ENCODE measurements at regions of chr17 and their contacts with region 1.

Region 1: DNA sequence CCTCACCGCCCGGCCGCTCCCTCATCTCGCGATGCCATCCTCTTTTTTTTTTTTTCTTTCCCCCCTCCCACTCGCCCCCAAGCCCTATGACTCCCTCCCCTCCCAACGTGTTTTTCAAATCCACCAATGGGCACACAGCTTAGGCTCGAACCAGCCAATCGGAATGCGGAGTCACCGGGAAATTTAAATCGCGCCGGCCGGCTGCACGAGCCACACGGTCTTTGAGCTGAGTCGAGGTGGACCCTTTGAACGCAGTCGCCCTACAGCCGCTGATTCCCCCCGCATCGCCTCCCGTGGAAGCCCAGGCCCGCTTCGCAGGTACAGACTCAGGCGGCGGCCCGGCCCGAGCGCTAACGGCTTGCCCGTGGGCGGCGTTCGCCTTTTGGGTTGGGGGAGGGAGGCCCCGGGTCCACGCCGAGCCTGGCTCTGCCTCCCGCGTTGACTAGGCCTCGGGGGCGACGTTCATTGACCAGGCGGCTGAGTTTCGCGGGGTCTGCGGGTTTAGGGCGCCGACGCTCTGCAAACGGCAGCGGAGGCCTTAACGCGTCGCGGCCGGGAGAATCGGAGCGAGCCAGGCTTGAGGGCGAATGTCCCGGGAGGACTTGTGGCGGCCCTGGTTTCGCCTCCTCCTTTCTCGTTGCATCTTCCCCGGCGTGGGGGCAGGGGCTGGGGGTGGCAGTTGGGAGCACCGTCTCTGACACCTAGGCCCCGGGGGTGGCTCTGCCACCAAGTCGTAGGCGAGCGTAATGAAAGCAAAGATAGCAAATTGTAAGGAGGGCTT is at the start of gene KPNA2:
- DNase-seq: peak; percentile 98
- H3K4me3 Mint-ChIP-seq: peak within 1 kb of the TSS; percentile 95
- H3K27ac Mint-ChIP-seq: peak within 1 kb of the TSS; percentile 92
- H3K4me1 Mint-ChIP-seq: peaks cover 16% of the 10 kb centered on the region
- H3K27me3 Mint-ChIP-seq: no peaks in the 10 kb centered on the region
- total RNA-seq, gene KPNA2: 210 and 240 TPM in 2 replicates

Region 2: GRCh38 chr17:67717624-67718329 is 317.9 kb before region 1 on chr17 and contains the start of gene NOL11:
- intact Hi-C with region 1: loop called (anchors 5 kb)
- DNase-seq: peak; percentile 100
- H3K4me3 Mint-ChIP-seq: peak within 1 kb of the TSS; percentile 90
- H3K27ac Mint-ChIP-seq: peak within 1 kb of the TSS; percentile 96
- H3K4me1 Mint-ChIP-seq: peaks cover 16% of the 10 kb centered on the region
- H3K27me3 Mint-ChIP-seq: peaks cover 4% of the 10 kb centered on the region
- total RNA-seq, gene NOL11: 110 and 118 TPM in 2 replicates

Region 3: GRCh38 chr17:67993596-67994361 is 41.9 kb before region 1 on chr17:
- intact Hi-C with region 1: loop called (anchors 5 kb)
- DNase-seq: peak; percentile 92
- H3K4me3 Mint-ChIP-seq: peak overlapping the region; percentile 82
- H3K27ac Mint-ChIP-seq: peak overlapping the region; percentile 89
- H3K4me1 Mint-ChIP-seq: peaks cover 35% of the 10 kb centered on the region
- H3K27me3 Mint-ChIP-seq: peaks cover 28% of the 10 kb centered on the region

Region 4: DNA sequence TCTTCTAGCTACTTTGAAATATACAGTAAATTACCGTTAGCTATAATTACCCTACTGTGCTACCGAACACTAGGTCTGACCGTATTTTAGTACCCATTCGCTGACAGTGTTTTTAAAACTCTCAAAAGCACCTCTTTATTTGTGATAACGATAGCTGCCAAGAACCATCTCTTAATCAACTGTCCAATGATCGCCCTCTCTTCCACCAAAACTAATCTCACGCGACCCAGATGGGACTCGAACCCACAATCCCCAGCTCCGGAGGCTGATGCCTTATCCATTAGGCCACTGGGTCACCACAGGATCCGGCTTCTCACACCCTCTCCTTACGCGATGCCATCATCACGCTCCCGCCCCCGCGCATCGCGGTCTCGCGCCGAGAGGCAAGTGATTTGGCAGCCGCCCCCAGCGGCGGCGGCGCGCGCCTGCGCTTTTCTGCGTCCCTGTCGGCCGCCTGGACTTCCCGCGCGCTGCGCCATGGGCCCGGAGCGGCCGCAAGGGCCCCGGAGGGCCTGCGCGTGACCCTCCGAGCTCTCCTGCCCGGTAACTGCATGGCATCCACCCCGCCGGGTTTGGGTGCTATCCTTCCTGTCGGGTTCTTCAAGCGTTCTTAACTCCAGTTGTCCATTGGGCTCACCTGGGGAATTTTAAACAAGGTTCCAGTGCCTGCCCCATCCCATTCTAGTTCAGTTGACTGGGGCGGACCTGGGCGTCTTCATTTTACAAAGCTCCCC is 15.9 kb before region 1 on chr17:
- intact Hi-C with region 1: loop called (anchors 1 kb)
- DNase-seq: peak; percentile 99
- H3K4me3 Mint-ChIP-seq: peak overlapping the region; percentile 82
- H3K27ac Mint-ChIP-seq: peak overlapping the region; percentile 90
- H3K4me1 Mint-ChIP-seq: peaks cover 14% of the 10 kb centered on the region
- H3K27me3 Mint-ChIP-seq: peaks cover 9% of the 10 kb centered on the region

Region 5: DNA sequence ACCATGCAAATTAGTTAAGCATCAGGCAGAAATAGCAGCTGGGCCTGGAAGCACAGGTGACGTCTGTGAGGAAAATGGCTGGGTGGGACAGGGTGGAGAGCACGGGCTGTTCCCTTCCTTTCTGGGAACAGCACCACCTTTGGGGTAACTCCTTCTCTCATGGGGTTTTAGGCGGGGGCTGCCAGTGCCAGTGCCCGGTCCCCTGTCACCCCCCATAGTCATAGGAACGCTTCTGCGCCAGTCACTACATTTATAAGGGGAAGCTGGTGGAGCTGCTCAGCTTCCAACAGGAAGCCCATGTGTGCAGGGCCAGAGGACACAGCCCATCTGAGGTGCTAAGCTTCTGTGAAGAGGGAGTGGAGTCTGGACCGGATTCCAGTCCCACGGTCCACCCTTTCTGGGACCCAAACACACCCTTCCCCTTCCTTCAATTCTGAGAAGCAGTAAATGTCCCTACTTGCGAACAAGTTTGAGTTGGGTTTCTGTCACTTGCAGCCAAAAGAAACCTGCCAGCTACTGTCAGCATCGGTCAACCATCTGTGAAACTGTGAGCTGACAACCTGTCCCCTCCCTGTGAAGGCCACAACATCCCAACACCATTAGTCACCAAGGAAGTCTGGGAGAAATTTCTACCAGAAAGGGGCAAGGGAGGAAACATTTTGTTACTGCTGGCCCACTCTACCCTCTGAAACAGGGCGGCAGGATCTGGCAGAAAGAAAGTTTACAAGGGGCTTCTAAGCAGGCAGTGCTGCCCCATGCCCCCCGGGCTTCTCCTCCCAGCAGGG is 126.1 kb after region 1 on chr17:
- intact Hi-C with region 1: no loop called
- DNase-seq: no peak
- H3K4me3 Mint-ChIP-seq: no peak overlapping the region
- H3K27ac Mint-ChIP-seq: no peak overlapping the region
- H3K4me1 Mint-ChIP-seq: peaks cover 2% of the 10 kb centered on the region
- H3K27me3 Mint-ChIP-seq: no peaks in the 10 kb centered on the region

Region 6: GRCh38 chr17:68247445-68248198 is 211.9 kb after region 1 on chr17 and contains the start of gene AMZ2:
- intact Hi-C with region 1: loop called (anchors 1 kb)
- DNase-seq: peak; percentile 100
- H3K4me3 Mint-ChIP-seq: peak within 1 kb of the TSS; percentile 86
- H3K27ac Mint-ChIP-seq: peak within 1 kb of the TSS; percentile 93
- H3K4me1 Mint-ChIP-seq: peaks cover 37% of the 10 kb centered on the region
- H3K27me3 Mint-ChIP-seq: no peaks in the 10 kb centered on the region
- total RNA-seq, gene AMZ2: 75.8 and 77.5 TPM in 2 replicates